ENCODE measurements at regions of chr5 and their contacts with region 1.

Region 1: DNA sequence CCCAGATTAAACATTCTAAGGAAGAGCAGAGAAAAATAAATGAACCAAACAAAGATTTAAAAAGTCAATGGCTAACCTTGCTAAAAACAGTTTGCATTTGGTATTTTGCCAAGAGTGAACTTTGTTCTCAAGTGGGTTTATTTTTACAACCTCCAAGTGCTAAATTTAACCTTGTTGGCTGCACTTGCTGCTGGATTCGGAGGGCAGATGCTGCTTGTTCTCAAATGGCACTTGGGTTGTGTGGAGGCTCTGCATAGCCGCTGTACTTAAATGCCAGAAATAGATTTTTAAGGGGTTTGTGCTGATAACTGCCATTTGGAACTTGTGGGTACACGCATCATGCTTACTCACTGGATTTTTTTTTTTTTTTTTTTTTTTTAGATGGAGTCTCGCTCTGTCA is 13.3 kb upstream of the SPATA24 start:
- DNase-seq: no peak
- ATAC-seq: no peak
- H3K4me3 Mint-ChIP-seq: no peak overlapping the region
- H3K27ac Mint-ChIP-seq: peak overlapping the region; percentile 98
- H3K4me1 Mint-ChIP-seq: peaks cover 50% of the 10 kb centered on the region
- H3K27me3 Mint-ChIP-seq: no peaks in the 10 kb centered on the region

Region 2: DNA sequence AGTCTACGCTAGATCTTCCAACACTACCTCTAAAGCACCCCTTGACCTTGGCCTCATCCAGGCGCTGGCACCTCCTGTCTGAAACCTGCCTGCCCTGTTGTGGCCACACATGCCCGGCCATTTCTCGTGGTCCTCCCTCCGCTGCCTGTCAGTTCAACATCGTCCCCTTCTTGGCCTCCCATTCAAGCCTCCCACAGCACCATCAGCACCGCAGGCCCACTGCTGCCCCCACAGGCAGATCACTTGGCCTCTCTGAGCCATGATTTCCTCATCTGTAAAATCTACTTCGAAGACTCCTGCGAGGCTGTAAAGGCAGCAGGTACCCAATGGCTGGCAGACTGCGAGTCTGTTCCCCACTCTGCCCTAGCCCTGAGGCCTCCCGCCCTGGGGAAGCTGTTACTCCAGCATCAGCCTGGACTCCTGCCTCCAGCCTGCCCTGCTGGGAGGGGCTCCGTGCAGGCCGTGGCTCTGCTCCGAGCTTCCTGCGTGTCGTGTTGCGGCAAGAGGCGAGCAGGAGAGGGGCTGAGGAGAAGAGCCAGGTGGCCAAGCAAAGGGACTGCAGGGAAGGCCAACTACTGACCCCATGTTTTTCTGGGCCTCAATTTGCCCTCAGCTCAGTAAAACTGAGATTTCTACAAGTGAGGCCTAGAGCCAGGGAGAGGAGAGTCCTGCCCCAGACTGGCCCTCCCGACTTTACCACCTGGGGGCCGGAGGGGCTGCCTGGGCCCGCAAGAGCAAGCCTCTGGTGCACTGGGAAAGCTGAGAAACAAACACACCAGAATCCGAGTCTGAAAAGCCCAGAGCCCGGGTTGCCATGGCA is 471.6 kb before region 1 on chr5:
- CTCF ChIA-PET with region 1: no interaction called
- POLR2A ChIA-PET with region 1: no interaction called
- intact Hi-C with region 1: no loop called
- DNase-seq: no peak
- ATAC-seq: no peak
- H3K4me3 Mint-ChIP-seq: no peak overlapping the region
- H3K27ac Mint-ChIP-seq: no peak overlapping the region
- H3K4me1 Mint-ChIP-seq: peaks cover 4% of the 10 kb centered on the region
- H3K27me3 Mint-ChIP-seq: no peaks in the 10 kb centered on the region

Region 3: DNA sequence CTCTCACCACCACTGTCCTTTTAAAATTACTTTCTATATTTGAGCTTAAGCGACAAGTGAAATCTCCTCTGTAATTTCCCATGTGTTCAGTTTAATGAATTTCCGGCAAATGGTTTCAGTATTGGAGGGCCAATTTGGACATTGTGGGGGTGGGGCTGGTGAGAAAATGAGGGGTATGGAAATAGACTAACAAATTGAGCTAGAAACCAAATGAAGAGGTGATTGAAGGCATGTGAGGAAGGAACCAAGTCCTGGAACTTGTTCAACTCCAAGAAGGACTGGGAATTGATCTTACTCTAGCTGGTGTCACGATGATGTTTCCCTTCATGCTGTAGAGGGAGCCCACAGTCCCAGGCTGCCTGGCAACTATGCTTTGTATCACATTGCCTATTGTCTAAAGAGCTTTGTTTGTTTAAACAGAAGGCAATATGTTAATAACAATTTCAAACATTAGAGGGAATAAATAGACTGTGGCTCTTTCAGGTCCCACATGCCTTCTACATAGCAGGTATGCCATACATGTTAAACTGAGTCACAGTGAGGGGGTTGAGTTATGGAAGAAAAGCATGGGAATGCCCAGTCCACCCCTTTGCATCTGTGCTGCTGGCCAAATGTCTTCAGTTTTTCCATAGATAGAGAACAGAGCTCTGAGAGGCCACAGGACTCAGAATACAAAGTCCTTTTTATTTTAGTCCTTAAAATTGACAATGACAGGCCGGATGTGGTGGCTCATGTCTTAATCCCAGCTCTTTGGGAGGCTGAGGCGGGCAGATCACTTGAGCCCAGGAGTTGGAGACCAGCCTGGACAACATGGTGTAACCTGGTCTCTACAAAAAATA is 148.6 kb before region 1 on chr5:
- CTCF ChIA-PET with region 1: no interaction called
- POLR2A ChIA-PET with region 1: no interaction called
- intact Hi-C with region 1: no loop called
- DNase-seq: no peak
- ATAC-seq: no peak
- H3K4me3 Mint-ChIP-seq: no peak overlapping the region
- H3K27ac Mint-ChIP-seq: no peak overlapping the region
- H3K4me1 Mint-ChIP-seq: peaks cover 25% of the 10 kb centered on the region
- H3K27me3 Mint-ChIP-seq: no peaks in the 10 kb centered on the region

Region 4: DNA sequence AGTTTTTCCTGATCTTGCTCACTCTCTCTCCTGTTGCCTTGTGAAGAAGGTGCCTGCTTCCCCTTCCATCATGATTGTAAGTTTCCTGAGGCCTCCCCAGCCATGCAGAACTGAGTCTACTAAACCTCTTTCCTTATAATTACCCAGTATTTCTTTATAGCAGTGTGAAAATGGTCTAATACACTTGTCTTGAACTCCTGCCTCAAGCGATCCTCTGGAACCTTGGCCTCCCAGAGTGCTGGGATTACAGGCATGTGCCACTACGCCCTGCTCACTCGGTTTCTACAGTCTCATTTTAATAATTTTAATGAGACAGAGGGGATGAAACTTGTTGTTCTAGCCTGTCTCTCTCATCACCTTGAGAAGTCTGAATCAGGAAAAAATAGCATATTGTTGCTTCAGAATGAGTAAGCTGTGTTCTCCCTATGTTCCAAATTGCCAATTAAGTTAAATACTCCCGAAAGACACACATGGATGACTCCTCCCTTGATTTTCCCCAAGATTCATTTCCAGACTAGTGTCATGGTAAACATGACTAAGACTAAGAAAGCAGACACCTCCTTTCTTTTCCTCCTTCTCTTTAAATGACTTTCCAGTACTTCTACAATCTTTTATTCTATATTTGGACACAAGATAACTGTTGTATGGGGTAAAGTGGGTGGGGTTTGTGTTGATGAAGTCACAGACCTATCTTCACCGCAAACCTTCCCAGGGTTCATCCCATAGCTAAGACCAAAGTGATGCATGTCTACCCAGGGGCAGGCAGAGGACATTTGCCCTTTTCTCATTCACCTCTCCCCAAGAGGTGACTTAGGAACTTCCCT is 30.0 kb after region 1 on chr5:
- CTCF ChIA-PET with region 1: interaction called, 4 read pairs
- POLR2A ChIA-PET with region 1: interaction called, 6 read pairs
- intact Hi-C with region 1: loop called (anchors 1 to 2 kb)
- DNase-seq: peak; percentile 68
- ATAC-seq: peak; percentile 77
- H3K4me3 Mint-ChIP-seq: peak overlapping the region; percentile 1
- H3K27ac Mint-ChIP-seq: peak overlapping the region; percentile 92
- H3K4me1 Mint-ChIP-seq: peaks cover 66% of the 10 kb centered on the region
- H3K27me3 Mint-ChIP-seq: no peaks in the 10 kb centered on the region

Region 5: DNA sequence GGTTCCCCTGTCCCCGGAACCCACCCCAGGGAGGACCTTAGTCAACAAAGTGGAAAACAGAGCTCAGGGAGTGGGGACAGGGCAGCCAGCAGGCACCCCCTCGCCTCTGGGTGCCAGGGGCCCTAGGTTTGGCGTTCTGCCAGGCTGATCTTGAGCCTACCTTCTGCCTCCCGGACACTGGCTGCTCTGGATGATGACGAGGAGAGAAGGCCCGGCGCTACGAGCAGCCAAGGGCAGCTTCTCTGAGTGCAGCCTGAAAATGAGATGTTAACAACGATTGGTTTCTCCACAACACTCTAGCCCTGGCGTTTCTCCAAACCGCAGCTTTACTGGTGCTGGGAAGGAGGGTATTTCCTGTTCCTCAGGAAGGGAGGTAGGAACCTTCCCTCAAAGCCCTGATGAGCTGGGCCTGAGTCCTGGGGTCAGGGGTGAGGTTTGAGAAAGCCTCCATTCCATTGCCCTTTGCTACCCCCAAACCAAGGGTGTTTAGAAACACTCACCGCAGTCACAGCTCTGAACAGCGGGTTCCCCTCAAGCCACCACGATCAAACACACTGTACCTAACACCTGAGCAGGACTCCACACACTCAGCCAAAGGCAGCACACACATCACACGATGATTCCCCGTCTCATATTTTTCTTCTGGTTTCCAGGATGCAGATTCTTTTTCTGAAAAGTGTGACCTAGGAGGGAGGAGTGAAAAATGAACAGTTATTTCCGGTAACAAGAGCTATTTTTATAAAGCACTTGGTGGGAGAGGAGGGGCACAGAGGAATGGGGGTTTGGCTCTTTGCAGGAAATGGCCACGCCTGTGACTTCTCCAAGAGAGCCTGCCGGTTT is 65.1 kb after region 1 on chr5 and contains the start of gene STING1:
- CTCF ChIA-PET with region 1: interaction called, 32 read pairs
- POLR2A ChIA-PET with region 1: interaction called, 7 read pairs
- intact Hi-C with region 1: loop called (anchors 1 kb)
- DNase-seq: peak; percentile 84
- ATAC-seq: peak; percentile 64
- H3K4me3 Mint-ChIP-seq: peak within 1 kb of the TSS; percentile 88
- H3K27ac Mint-ChIP-seq: peak within 1 kb of the TSS; percentile 99
- H3K4me1 Mint-ChIP-seq: peaks cover 35% of the 10 kb centered on the region
- H3K27me3 Mint-ChIP-seq: no peaks in the 10 kb centered on the region
- total RNA-seq, gene STING1: 178 to 183 TPM

Region 6: DNA sequence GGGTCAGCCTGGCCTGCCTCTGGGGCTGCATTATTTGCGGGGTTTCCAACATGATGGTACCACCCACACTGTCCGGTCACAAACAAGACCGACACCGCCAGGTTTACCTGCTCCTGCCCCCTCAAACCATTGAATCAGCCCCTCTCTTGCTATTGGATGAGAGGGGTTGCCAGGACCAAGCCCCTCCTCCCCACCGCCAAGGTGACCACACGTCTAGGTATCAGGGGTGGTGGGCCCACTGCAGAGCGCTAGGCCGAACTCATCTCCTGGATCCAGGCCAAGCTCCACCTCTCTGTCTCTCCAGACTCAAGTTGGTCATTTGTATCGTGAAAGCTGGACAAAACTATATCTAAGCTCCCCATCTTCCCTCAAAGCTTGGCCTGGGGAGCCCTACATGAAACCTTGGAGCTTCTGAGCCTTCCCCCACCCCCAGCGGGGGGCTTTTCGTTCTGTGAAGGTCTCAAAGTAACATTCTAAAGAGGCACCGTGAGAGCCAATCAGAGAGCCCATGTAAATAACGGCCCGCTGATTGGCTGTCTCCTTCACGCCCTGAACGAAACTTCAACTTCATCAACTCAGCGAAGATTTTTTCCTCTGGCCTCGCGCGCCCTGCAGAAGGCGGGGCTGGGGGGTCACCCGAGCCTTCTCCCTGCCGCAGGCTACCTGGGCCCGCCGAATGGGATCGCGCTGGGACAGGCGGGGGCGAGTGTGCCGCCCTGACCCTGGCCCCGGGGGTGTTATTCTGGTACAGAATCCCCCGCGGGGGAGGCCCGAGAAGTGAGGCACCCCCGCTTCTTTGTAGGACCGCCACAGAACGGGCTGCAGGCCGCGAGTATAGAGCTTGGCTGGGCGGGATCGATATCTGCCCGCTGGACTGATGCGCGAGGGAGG is 328.8 kb after region 1 on chr5:
- CTCF ChIA-PET with region 1: no interaction called
- POLR2A ChIA-PET with region 1: no interaction called
- intact Hi-C with region 1: loop called in 1 of 2 experiments (anchors 5 kb)
- DNase-seq: peak; percentile 70
- ATAC-seq: peak; percentile 27
- H3K4me3 Mint-ChIP-seq: peak overlapping the region; percentile 60
- H3K27ac Mint-ChIP-seq: no peak overlapping the region
- H3K4me1 Mint-ChIP-seq: peaks cover 29% of the 10 kb centered on the region
- H3K27me3 Mint-ChIP-seq: peaks cover 16% of the 10 kb centered on the region